Body of pancreas (tissue), 4 donors: ENCODE measurements at regions of chr4 and their contacts with region 1.

Region 1: GRCh38 chr4:182938205-182938645 is 21.0 kb upstream of the DCTD start:
- DNase-seq: peak; percentile 71 to 77 (median 75)
- ATAC-seq: peak; percentile 98
- H3K4me3 ChIP-seq: no peak overlapping the region
- H3K27ac ChIP-seq: no peak overlapping the region
- H3K4me1 ChIP-seq: peaks cover 6% of the 10 kb centered on the region
- H3K27me3 ChIP-seq: no peaks in the 10 kb centered on the region
- CTCF ChIP-seq: peak; percentile 70 to 88 (median 86)
- POLR2A ChIP-seq: no peak

Region 2: GRCh38 chr4:183059797-183060196 is 121.6 kb after region 1 on chr4:
- intact Hi-C with region 1: loop called (anchors 10 kb)
- DNase-seq: no peak
- ATAC-seq: no peak
- H3K4me3 ChIP-seq: no peak overlapping the region
- H3K27ac ChIP-seq: no peak overlapping the region
- H3K4me1 ChIP-seq: no peaks in the 10 kb centered on the region
- H3K27me3 ChIP-seq: no peaks in the 10 kb centered on the region
- CTCF ChIP-seq: no peak
- POLR2A ChIP-seq: no peak